Mammary epithelial cell (primary cell): ENCODE measurements at regions of chr9 and their contacts with region 1.

Region 1: DNA sequence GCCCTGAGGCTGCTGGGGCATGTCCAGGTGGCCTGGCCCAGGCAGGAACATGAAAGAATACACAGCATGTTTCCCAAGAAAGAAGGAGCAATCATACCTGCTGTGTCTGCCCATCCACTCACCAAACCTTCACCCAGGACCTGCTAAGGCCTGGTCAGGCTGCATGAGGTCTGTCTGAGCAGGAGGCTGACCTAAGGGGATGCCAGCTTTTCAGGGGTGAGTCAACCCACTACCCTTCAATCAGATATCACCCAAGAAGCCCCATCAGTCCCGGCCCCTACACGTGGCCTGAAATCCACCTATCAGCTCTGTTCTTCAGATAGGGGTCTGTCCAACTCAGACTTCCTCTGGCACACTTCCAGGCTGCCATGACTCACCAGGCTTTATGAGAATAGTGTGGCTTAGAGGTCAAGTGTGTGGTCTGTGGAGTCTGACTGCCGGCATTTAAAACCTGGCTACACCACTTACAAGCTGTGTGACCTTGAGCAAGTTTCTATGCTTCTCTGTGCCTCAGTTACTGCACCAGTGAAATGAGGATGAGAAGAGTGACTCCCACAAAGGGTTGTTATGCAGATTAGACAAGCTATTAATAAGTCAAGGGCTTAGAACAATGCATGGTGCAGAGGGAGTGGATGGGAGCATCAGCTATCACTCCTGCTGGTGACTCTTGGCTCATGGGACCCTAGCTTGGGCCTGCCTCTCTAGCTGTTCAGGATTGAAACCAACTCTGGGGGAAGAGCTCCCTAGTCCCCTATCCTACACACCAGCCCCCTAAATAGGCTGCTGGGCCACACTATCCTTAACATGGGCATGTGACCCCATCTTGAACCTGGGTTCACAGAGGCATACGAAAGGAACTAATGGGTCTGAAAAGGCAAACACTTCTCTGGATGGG is 130.3 kb downstream of the PAX5 start:
- DNase-seq: peak; percentile 73
- H3K4me3 ChIP-seq: no peak overlapping the region
- H3K27ac ChIP-seq: no peak overlapping the region
- H3K4me1 ChIP-seq: peaks cover 10% of the 10 kb centered on the region
- H3K27me3 ChIP-seq: peaks cover 19% of the 10 kb centered on the region
- CTCF ChIP-seq: no peak

Region 2: GRCh38 chr9:36818965-36819870 is 84.6 kb before region 1 on chr9:
- CTCF ChIA-PET with region 1: no interaction called
- dilution Hi-C with region 1: loop called (anchors 5 kb)
- in situ Hi-C with region 1: no loop called
- intact Hi-C with region 1: no loop called
- DNase-seq: no peak
- H3K4me3 ChIP-seq: no peak overlapping the region
- H3K27ac ChIP-seq: no peak overlapping the region
- H3K4me1 ChIP-seq: peaks cover 3% of the 10 kb centered on the region
- H3K27me3 ChIP-seq: peaks cover 4% of the 10 kb centered on the region
- CTCF ChIP-seq: no peak

Region 3: GRCh38 chr9:36862206-36863145 is 41.3 kb before region 1 on chr9:
- CTCF ChIA-PET with region 1: no interaction called
- dilution Hi-C with region 1: loop called (anchors 5 kb)
- in situ Hi-C with region 1: no loop called
- intact Hi-C with region 1: no loop called
- DNase-seq: peak; percentile 15
- H3K4me3 ChIP-seq: no peak overlapping the region
- H3K27ac ChIP-seq: no peak overlapping the region
- H3K4me1 ChIP-seq: no peaks in the 10 kb centered on the region
- H3K27me3 ChIP-seq: peaks cover 2% of the 10 kb centered on the region
- CTCF ChIP-seq: peak; percentile 40 to 66

Region 4: DNA sequence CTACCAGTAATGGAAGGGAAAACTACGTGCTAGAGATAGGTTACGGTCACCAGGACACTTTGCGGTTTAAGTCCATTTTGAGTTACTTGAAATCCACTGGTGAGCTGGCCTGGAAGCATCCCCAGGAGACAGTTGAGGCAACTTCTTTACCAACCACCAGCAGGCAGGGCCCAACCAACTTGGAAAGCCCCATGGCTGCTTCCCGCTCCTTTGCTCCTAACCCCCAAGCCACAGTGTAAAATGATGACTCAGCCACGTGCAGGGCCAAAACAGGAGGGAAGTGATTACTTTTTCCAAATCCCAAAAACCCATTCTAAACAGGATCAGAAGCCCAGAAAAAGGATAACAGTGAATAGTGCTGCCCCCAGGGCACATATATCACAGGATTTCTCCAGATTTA is 42.9 kb after region 1 on chr9:
- CTCF ChIA-PET with region 1: no interaction called
- dilution Hi-C with region 1: loop called (anchors 5 kb)
- in situ Hi-C with region 1: no loop called
- intact Hi-C with region 1: no loop called
- DNase-seq: peak; percentile 35
- H3K4me3 ChIP-seq: no peak overlapping the region
- H3K27ac ChIP-seq: no peak overlapping the region
- H3K4me1 ChIP-seq: no peaks in the 10 kb centered on the region
- H3K27me3 ChIP-seq: no peaks in the 10 kb centered on the region
- CTCF ChIP-seq: no peak

Region 5: DNA sequence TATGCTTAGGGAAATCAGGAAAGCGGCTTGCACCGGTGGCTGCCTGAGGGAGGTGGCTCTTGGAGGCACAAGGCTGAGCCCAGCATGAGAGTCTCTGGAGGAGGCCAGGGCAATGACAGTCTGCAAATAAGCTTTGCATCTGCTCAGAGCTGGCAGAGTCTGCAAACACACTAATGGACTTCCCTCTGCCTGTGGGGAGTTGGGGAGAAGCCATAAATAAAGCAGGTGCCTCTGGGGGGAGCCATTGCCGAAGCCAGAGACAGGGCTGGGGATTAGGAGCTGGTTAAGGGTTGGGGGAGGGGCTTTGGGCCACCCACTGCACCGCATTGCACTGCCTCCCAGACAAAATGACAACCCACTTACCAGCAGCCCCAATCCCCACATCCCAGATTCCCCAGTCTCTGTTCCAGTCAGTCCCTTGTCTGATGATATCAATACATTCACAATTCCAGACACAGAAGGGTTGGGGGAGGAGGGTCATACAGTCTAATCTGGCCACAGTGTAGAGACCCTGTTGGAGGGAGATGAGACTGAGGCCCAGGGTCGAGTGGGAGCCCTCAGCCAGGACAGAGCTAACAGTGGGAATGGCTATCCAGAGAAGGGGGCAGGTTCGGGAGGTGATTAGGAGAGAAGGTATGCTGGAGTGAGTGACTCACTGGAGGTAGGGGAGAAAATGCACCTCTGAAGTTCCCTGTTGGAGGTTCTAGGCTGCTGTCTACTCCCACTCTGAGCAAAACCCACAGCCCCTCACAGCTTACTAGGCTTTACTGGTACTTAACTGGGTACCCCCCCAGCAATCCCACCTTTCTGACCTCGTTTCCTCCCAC is 76.6 kb after region 1 on chr9:
- CTCF ChIA-PET with region 1: no interaction called
- dilution Hi-C with region 1: loop called (anchors 5 kb)
- in situ Hi-C with region 1: no loop called
- intact Hi-C with region 1: no loop called
- DNase-seq: peak; percentile 32
- H3K4me3 ChIP-seq: no peak overlapping the region
- H3K27ac ChIP-seq: no peak overlapping the region
- H3K4me1 ChIP-seq: peaks cover 19% of the 10 kb centered on the region
- H3K27me3 ChIP-seq: peaks cover 11% of the 10 kb centered on the region
- CTCF ChIP-seq: peak in 1 of 2 donors; percentile 32